HCT116 (cell line): ENCODE measurements at regions of chr11 and their contacts with region 1.

Region 1: DNA sequence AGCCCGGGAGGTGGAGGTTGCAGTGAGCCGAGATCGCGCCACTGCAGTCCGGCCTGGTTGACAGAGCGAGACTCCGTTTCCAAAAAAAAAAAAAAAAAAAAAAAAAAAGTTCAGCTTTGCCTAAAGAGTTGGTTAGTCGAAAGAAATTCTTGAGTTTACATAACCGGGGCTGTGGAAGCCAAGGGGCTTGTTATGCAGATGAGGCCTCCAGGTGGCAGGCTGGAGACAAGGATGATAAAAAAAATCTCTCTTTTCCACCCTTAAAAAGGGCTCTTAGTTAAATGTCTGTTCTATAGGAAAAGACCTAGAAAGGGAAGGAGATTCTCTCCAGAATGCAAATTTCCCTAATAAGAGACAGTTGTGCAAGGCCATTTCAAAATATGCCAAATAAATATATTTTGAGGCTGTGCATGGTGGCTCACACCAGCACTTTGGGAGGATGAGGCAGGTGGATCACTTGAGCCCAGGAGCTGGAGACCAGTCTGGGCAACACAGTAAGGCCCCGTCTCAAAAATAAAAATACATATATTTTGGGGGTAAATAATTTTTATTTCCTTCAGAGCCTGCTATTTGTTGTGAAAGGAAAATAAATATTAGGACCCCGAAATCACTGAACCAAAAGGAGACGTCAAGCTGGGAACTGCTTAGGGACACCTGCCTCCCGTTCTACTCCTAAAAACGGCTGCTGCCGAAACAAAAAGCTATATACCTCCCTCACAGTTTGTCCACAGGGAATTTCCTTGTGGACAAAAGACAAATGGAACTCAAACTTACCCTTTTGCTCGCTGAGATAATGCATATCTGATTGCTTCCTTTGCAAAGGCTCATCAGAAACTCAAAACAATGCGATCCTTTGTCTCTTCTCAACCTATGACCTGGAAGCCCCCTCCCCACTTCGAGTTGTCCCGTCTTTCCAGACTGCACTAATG is 2.4 kb upstream of the IFITM2 start:
- DNase-seq: no peak
- ATAC-seq: peak; percentile 46; the same call in 1 of the 2 replicates
- H3K4me3 ChIP-seq: no peak overlapping the region
- H3K27ac ChIP-seq: no peak overlapping the region
- H3K4me1 ChIP-seq: peaks cover 13 to 24% of the 10 kb centered on the region in 2 experiments
- H3K27me3 ChIP-seq: no peaks in the 10 kb centered on the region
- CTCF ChIP-seq: peak; percentile 64 to 68 (median 67); a peak in 5 of 6 replicates
- POLR2A ChIP-seq: no peak
- RAD21 ChIP-seq: peak; percentile 79

Region 2: GRCh38 chr11:396948-397548 is 91.9 kb after region 1 on chr11:
- CTCF ChIA-PET with region 1: no interaction called
- POLR2A ChIA-PET with region 1: no interaction called
- RAD21 ChIA-PET with region 1: no interaction called
- intact Hi-C with region 1: loop called (anchors 10 kb)
- DNase-seq: no peak
- ATAC-seq: no peak
- H3K4me3 ChIP-seq: no peak overlapping the region
- H3K27ac ChIP-seq: peak overlapping the region; percentile 32; the same call in 1 of the 2 replicates
- H3K4me1 ChIP-seq: peaks cover 21 to 36% of the 10 kb centered on the region in 2 experiments
- H3K27me3 ChIP-seq: no peaks in the 10 kb centered on the region
- CTCF ChIP-seq: no peak
- POLR2A ChIP-seq: no peak
- RAD21 ChIP-seq: no peak

Region 3: DNA sequence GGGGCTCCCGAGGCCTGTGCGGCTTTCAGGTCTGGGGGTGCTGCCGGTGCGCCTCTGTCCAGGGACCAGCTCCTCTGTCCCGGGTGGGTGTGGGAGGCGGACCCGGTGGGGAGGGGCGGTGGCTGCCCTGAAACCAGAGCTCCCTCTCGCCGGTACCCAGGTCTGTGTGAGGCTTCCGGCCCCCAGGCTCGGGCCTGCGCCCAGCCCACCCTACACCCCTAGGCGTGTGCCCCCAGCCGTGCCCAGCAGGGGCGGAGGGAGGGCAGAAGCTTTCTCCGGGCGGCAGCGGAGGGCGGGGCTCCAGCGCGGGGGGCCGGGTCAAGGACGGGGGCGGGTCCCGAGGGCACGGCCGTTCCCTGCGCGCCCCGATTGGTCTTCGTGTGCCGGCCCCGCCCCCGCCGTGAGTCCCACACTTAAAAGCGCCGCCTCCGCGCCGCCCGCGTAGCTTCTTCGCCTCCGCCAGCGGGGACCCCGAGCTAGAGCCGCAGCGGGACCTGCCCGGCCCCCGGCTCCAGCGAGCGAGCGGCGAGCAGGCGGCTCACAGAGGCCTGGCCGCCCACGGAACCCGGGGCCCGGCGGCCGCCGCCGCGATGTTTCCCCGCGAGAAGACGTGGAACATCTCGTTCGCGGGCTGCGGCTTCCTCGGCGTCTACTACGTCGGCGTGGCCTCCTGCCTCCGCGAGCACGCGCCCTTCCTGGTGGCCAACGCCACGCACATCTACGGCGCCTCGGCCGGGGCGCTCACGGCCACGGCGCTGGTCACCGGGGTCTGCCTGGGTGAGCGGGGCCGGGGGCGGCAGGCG is 514.2 kb after region 1 on chr11:
- CTCF ChIA-PET with region 1: no interaction called
- POLR2A ChIA-PET with region 1: no interaction called
- RAD21 ChIA-PET with region 1: no interaction called
- intact Hi-C with region 1: no loop called
- DNase-seq: no peak
- ATAC-seq: peak; percentile 75
- H3K4me3 ChIP-seq: peak overlapping the region; percentile 65 to 77
- H3K27ac ChIP-seq: peak overlapping the region; percentile 81; the same call in 1 of the 2 replicates
- H3K4me1 ChIP-seq: peaks cover 26 to 40% of the 10 kb centered on the region in 2 experiments
- H3K27me3 ChIP-seq: no peaks in the 10 kb centered on the region
- CTCF ChIP-seq: no peak
- POLR2A ChIP-seq: peak; percentile 86
- RAD21 ChIP-seq: no peak